Naive thymus-derived CD4-positive, alpha-beta T cell (primary cell): ENCODE measurements at regions of chr7 and their contacts with region 1.

Region 1: DNA sequence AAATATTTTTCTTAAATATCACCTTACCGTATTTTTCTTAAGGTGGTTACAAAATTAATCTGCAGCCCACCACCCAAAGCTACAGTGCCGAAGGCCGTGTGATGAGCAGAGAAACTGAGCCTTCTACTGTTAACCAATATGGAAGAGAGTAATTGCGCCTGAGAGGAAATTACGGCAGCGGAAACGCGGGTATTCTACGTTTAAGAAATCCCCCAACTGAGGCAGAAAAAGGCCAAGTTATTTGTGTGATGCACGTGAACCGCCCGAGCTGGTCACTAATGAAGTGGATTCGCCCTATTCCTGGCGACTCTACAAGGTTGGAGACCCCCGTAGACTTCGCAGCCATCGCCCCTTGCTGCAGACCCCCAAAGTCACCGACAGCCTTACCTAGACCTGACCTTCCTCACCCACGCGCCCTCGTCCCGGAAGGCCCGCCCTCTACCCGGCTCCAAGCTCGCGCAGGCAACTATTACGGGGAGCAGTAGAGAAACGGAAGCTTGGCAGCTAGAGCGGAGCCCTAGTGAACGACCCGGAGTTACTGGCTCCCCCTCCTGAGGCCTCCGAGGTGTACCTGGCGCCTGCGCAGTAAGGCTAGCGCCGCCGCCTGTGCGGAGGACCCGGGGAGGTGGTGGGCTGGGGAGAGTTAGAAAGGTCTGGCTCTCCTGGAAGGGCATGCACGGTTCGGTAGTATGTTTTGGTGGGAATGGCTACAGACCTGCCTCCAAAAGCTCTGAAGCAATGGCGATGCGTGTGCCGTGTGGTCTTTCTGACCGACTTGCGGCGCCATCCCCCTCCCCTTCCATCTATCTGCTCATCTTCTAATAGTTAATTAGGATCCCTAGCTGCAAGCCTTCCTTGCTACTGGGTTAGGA is at the start of gene MRPS33:
- DNase-seq: peak; percentile 79 to 97 (median 96)
- ATAC-seq: peak; percentile 99
- H3K4me3 ChIP-seq: peak within 1 kb of the TSS; percentile 82
- H3K4me3 Mint-ChIP-seq: peak within 1 kb of the TSS; percentile 85 to 99 (median 98)
- H3K27ac ChIP-seq: peak within 1 kb of the TSS; percentile 95
- H3K27ac Mint-ChIP-seq: peak within 1 kb of the TSS; percentile 97 to 100 (median 100)
- H3K4me1 ChIP-seq: peaks cover 8 to 16% of the 10 kb centered on the region in 2 donors
- H3K4me1 Mint-ChIP-seq: peaks cover 10 to 49% (median 39%) of the 10 kb centered on the region in 7 donors
- H3K27me3 ChIP-seq: no peaks in the 10 kb centered on the region
- H3K27me3 Mint-ChIP-seq: peaks cover 5 to 29% (median 8%) of the 10 kb centered on the region in 5 donors
- total RNA-seq, gene MRPS33: 25.9 to 69.1 (median 48.4) TPM

Region 2: DNA sequence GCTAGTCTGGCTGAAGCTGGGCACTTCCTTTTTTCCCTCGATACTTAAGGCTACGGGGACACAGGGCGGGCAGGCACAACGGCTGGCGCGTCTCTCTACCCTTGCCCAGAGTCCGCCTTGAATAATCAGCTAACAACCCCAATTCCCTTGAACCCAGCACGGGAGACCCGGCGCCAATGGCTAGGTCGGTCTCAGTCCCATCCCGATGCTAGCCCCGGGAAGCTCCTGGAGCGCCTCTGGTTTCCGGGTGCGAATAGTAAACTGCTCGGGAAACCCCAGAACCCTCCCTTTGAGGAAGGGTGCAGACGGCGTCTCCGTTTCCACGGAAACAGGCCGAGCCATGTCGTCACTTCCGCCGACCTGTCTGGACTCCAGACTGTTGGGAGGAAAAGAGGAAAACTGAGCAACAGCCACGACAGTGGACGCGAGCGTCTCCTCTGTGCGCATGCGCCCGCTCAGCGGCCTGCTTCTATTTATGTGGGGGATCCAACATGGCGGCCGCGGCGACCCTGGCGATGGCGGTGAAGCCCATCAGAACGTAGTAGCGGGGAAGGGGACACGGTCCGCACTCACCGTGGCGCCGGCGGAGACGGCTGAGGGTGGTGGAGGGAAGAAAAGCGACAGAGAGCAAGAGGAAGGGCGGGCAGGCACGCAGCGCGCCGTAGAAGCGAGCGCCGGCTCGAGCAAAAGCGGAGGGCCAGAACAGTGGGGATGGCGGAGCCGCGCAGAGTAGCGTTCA is 1783.8 kb before region 1 on chr7 and contains the start of gene UBN2:
- CTCF ChIA-PET with region 1: no interaction called
- POLR2A ChIA-PET with region 1: no interaction called
- intact Hi-C with region 1: loop called in 1 of 2 experiments (anchors 10 kb)
- DNase-seq: peak; percentile 68 to 91 (median 76)
- ATAC-seq: peak; percentile 86
- H3K4me3 ChIP-seq: peak within 1 kb of the TSS; percentile 77
- H3K4me3 Mint-ChIP-seq: peak within 1 kb of the TSS; percentile 96 to 100 (median 99)
- H3K27ac ChIP-seq: peak within 1 kb of the TSS; percentile 85
- H3K27ac Mint-ChIP-seq: peak within 1 kb of the TSS; percentile 93 to 98 (median 96)
- H3K4me1 ChIP-seq: no peaks in the 10 kb centered on the region
- H3K4me1 Mint-ChIP-seq: peaks cover 24 to 33% (median 29%) of the 10 kb centered on the region in 7 donors
- H3K27me3 ChIP-seq: no peaks in the 10 kb centered on the region
- H3K27me3 Mint-ChIP-seq: peaks cover 0 to 36% (median 5%) of the 10 kb centered on the region in 5 donors
- total RNA-seq, gene UBN2: 16.2 to 31.2 (median 20.5) TPM

Region 3: DNA sequence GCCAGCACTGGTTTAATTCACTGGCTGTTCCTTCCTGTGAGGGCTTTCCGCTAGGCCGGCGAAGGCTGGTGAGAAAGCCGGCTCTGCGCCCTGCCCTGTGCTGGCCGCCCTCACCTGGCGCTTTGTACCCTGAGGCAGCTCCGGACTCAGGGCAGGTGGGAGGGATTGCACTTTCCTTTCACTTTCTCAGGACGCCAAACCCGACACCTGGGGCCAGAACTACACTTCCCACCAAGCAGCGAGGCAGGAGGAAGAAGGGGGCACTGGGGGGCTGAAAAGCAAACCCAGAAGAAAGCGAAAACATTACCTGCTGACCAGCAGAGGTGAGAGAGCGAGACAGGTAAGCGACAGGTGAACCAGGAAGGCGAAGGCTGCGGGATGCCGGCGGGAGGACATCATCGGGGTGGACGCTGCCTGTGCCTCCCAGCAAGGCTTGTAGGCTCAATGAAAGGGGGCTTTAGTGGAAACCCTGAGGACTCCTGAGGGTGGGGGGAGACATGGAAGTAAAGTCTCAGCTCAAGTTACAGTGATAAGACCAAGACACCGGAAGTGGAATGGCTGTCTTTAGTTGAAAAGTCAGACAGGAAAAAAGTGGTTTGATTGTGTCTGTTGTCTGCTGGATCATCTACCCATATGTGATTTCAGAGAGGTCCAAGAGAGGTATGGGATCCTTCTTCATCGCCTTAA is 610.7 kb before region 1 on chr7 and contains the start of gene RAB19:
- CTCF ChIA-PET with region 1: no interaction called
- POLR2A ChIA-PET with region 1: no interaction called
- intact Hi-C with region 1: loop called (anchors 5 kb)
- DNase-seq: peak; percentile 7 to 67 (median 56)
- ATAC-seq: peak; percentile 87
- H3K4me3 ChIP-seq: peak within 1 kb of the TSS; percentile 82
- H3K4me3 Mint-ChIP-seq: peak within 1 kb of the TSS; percentile 92 to 99 (median 97)
- H3K27ac ChIP-seq: peak within 1 kb of the TSS; percentile 87
- H3K27ac Mint-ChIP-seq: peak within 1 kb of the TSS; percentile 91 to 99 (median 96)
- H3K4me1 ChIP-seq: peaks cover 8 to 11% of the 10 kb centered on the region in 2 donors
- H3K4me1 Mint-ChIP-seq: peaks cover 13 to 42% (median 29%) of the 10 kb centered on the region in 7 donors
- H3K27me3 ChIP-seq: no peaks in the 10 kb centered on the region
- H3K27me3 Mint-ChIP-seq: peaks cover 0 to 3% (median 0%) of the 10 kb centered on the region in 5 donors
- total RNA-seq, gene RAB19: 1.8 to 13.3 (median 3.3) TPM

Region 4: GRCh38 chr7:140673063-140673773 is 341.5 kb before region 1 on chr7:
- CTCF ChIA-PET with region 1: interaction called, 3 read pairs
- POLR2A ChIA-PET with region 1: interaction called, 4 read pairs
- intact Hi-C with region 1: loop called (anchors 1 kb)
- DNase-seq: peak; percentile 56 to 78 (median 75)
- ATAC-seq: peak; percentile 82
- H3K4me3 ChIP-seq: peak overlapping the region; percentile 82
- H3K4me3 Mint-ChIP-seq: peak overlapping the region; percentile 81 to 94 (median 89)
- H3K27ac ChIP-seq: peak overlapping the region; percentile 91
- H3K27ac Mint-ChIP-seq: peak overlapping the region; percentile 68 to 97 (median 88)
- H3K4me1 ChIP-seq: peaks cover 11 to 14% of the 10 kb centered on the region in 2 donors
- H3K4me1 Mint-ChIP-seq: peaks cover 16 to 42% (median 37%) of the 10 kb centered on the region in 7 donors
- H3K27me3 ChIP-seq: no peaks in the 10 kb centered on the region
- H3K27me3 Mint-ChIP-seq: peaks cover 0 to 7% (median 0%) of the 10 kb centered on the region in 5 donors

Region 5: GRCh38 chr7:140810830-140811556 is 203.8 kb before region 1 on chr7:
- CTCF ChIA-PET with region 1: interaction called, 126 read pairs
- POLR2A ChIA-PET with region 1: interaction called, 33 read pairs
- intact Hi-C with region 1: loop called (anchors 1 kb)
- DNase-seq: peak; percentile 19 to 76 (median 65)
- ATAC-seq: peak; percentile 91
- H3K4me3 ChIP-seq: no peak overlapping the region
- H3K4me3 Mint-ChIP-seq: no peak overlapping the region
- H3K27ac ChIP-seq: no peak overlapping the region
- H3K27ac Mint-ChIP-seq: peak overlapping the region in 6 of 9 donors; percentile 6 to 82 (median 60)
- H3K4me1 ChIP-seq: no peaks in the 10 kb centered on the region
- H3K4me1 Mint-ChIP-seq: peaks cover 0 to 22% (median 4%) of the 10 kb centered on the region in 7 donors
- H3K27me3 ChIP-seq: no peaks in the 10 kb centered on the region
- H3K27me3 Mint-ChIP-seq: no peaks in the 10 kb centered on the region

Region 6: GRCh38 chr7:141072548-141073172 is 57.9 kb after region 1 on chr7:
- CTCF ChIA-PET with region 1: no interaction called
- POLR2A ChIA-PET with region 1: no interaction called
- intact Hi-C with region 1: loop called (anchors 2 kb)
- DNase-seq: peak in 5 of 9 donors; percentile 2 to 39 (median 5)
- ATAC-seq: peak; percentile 45
- H3K4me3 ChIP-seq: peak overlapping the region; percentile 42
- H3K4me3 Mint-ChIP-seq: peak overlapping the region; percentile 74 to 92 (median 86)
- H3K27ac ChIP-seq: no peak overlapping the region
- H3K27ac Mint-ChIP-seq: no peak overlapping the region
- H3K4me1 ChIP-seq: peaks cover 5 to 6% of the 10 kb centered on the region in 2 donors
- H3K4me1 Mint-ChIP-seq: peaks cover 17 to 30% (median 28%) of the 10 kb centered on the region in 7 donors
- H3K27me3 ChIP-seq: peaks cover 4 to 31% of the 10 kb centered on the region in 2 donors
- H3K27me3 Mint-ChIP-seq: peaks cover 42 to 49% (median 48%) of the 10 kb centered on the region in 5 donors

Region 7: DNA sequence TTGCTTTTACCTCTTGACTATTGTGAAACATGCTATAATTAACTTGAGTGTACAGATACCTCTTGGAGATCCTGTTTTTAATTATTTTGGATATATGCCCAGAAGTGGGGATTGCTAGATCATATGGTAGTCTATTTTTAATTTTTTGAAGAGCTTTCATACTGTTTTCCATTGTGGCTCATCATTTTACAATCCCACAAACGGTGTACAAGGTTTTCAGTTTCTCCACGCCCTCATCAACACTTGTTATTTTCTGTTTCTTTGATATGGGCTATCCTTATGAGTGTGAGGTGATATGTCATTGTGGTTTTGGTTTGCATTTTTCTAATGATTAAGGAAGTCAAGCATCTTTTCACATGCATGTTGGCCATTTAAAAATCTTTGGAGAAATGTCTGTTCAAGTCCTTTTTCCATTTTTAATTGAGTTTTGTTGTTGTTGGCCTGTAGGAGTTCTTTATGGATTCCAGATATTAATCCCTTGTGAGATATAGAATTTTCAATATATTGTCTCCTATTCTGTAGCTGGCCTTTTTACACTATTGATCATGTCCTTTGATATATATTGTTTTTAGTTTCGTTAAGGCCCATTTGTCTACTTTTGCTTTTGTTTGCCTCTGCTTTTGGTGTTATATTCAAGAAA is 543.9 kb after region 1 on chr7:
- CTCF ChIA-PET with region 1: no interaction called
- POLR2A ChIA-PET with region 1: no interaction called
- intact Hi-C with region 1: loop called in 1 of 2 experiments (anchors 2 kb)
- DNase-seq: no peak
- ATAC-seq: peak; percentile 80
- H3K4me3 ChIP-seq: no peak overlapping the region
- H3K4me3 Mint-ChIP-seq: peak overlapping the region in 2 of 10 donors; percentile 11 to 71
- H3K27ac ChIP-seq: no peak overlapping the region
- H3K27ac Mint-ChIP-seq: peak overlapping the region in 3 of 9 donors; percentile 3 to 96 (median 6)
- H3K4me1 ChIP-seq: peaks cover 0 to 25% of the 10 kb centered on the region in 2 donors
- H3K4me1 Mint-ChIP-seq: peaks cover 18 to 68% (median 34%) of the 10 kb centered on the region in 7 donors
- H3K27me3 ChIP-seq: no peaks in the 10 kb centered on the region
- H3K27me3 Mint-ChIP-seq: no peaks in the 10 kb centered on the region